Right ventricle myocardium superior (tissue), 1 donor: ENCODE measurements at regions of chr6 and their contacts with region 1.

Region 1: DNA sequence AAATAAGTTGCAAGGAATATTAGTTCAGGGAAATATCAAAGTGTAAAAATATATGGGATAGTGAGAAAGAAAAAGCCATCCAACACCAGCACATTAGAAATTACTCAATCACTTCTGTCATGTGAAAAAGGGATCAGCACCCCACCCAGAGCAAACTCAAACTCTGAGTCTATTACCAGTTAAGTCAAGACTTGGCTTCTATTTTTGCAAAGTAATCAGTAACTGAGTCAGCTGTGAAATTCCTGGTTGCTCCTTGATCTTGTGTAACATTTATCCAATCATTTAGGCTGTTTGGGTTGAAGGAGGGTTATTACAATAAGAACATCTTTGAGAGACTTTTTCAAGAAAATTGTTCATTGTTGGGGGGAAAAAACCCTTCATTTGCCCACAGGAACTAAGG is 51.2 kb downstream of the SLC22A23 start:
- DNase-seq: no peak
- ATAC-seq: peak; percentile 72

Region 2: DNA sequence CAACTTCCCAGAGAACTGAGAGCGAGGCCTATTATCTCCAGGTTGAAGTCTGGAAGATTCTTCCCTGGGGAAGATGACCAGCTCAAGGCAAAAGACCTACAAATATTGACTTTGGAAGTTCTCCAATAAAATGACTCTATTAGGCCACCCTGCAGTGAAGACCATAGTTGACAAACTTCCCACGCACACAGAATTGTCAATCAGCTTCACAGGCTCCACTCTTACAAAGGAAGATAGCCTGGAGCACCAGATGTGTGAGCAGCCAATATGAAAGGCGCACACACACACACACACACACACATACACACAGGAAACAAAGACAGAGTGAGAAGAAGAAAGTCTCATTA is 557.2 kb after region 1 on chr6:
- intact Hi-C with region 1: loop called (anchors 5 kb)
- DNase-seq: no peak
- ATAC-seq: no peak